Activated CD4-positive, alpha-beta memory T cell treated with anti-CD3 and anti-CD28 coated beads for 36 hours (primary cell): ENCODE measurements at regions of chr4 and their contacts with region 1.

Region 1: DNA sequence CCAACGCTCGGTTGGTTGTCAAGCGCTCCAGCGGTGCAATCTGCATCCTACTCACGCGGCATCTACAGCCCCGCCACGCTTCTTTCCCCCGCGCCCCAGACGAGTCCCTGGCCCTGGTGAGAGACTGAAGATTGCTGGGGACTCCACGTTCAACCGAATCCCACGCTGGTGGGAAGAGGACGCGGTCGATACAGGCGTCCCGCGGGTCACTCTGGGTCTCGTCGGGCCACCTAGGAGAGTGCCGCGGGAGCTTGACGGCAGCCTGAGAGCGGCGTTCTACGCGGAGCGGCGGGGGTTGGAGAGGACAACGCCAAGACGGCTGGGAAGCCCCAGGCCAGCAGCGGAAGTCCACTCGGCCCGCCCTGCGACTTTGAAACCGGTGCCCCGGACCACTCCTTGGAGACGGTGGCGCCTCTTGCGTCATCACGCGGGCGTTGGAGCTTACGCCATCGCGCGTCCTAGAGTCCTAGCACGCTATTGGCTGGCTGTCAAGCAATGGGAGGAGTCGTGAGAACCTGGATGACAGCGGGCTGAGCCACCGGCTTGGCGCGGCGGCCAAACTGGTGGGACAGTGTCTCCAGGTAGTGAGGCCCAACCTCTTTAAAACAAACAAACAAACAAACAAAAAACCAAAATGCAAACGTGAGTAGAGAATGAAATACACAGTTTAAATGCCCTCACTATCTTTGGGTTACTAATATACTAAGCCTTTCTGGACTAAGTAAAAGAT is at the start of gene SCLT1:
- DNase-seq: peak; percentile 98
- H3K4me3 Mint-ChIP-seq: peak within 1 kb of the TSS; percentile 53
- H3K27ac Mint-ChIP-seq: no peak within 1 kb of the TSS
- H3K4me1 Mint-ChIP-seq: peaks cover 33% of the 10 kb centered on the region
- H3K27me3 Mint-ChIP-seq: no peaks in the 10 kb centered on the region
- total RNA-seq, gene SCLT1: 20.8 to 20.9 TPM

Region 2: DNA sequence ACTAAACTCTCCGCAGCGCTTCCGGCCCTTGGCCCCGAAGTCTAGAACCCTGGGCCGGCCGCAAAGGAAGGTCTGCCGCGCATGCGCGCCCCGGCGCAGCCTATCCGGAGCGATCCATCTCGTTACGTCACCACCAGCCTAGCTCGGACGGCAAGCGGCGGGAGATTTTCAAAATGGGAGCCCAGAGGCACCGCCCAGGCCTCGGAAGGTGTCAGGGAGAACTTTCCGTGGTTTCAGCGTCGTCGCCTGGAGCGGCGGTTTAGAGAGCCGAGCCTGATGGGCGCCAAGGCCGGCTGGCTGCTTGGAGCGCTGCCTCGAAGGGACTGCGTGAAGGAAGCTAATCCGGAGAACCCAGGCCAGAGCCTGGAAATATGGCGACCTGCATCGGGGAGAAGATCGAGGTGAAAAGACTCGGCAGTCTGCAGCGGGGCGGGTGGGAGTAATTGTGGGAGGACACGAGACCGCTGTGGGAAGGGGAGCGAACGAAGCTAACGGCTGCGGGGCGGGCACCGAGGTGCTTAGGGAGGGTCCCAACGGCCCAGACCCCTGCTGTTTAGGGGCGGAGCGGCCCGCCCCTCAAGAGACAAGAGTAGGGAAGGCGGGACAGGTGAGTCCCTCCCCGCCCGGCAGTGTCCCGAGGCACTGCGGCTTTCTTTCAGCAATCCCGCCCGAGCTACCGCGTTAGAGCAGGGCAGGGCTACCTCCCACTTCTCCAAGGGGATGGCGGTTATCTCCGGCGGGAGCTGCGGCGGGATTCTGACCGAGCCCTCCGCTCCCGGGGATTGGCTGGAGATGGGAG is 1212.4 kb before region 1 on chr4 and contains the start of gene PLK4:
- CTCF ChIA-PET with region 1: no interaction called
- POLR2A ChIA-PET with region 1: no interaction called
- intact Hi-C with region 1: loop called (anchors 1 kb)
- DNase-seq: peak; percentile 97
- H3K4me3 Mint-ChIP-seq: peak within 1 kb of the TSS; percentile 95
- H3K27ac Mint-ChIP-seq: peak within 1 kb of the TSS; percentile 98
- H3K4me1 Mint-ChIP-seq: peaks cover 14% of the 10 kb centered on the region
- H3K27me3 Mint-ChIP-seq: peaks cover 2% of the 10 kb centered on the region
- total RNA-seq, gene PLK4: 43.5 to 45.6 TPM

Region 3: DNA sequence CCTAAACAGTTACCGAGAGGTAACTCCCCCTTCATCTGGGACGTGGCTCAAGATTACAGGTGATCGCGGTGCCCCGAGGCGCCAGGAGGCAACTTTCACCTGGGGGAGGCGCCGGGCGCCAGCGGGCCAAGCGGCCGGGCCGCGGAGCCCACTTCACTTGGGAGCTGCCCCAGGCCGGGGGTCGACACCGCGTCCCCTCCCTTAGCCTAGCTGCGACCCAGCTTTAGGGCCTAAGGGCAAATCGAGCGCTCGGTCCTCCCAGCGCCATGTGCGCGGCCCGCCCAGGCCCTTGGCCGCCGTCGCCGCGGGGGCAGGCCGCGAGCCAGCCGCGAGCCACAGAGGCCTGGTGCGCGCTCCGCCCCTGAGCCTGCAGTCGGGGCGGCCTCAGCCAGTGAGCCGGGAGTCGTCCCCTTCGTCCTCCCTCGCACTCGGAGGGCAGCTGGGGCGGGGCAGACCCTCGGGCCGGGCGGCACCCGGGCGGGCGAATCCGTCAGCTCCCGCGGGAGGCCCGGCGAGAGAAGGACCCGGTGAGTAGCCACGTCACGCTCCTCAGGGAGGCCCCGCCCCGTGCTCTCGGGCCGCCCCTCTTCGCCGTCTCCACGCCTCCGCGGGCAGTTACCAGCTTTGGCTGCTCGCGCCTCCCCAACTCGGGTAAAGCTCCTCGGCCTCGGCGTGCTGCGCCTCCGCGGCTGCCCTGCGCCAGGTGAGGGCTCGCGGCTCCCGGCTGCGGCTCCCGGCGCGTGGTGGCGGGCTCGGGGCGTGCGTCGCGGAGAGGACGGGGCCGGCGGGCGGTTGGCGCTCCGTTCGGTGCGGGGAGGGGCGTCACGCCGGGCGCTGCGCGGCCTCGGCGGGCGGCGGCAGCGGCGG is 1032.4 kb before region 1 on chr4 and contains the start of gene LARP1B:
- CTCF ChIA-PET with region 1: no interaction called
- POLR2A ChIA-PET with region 1: no interaction called
- intact Hi-C with region 1: loop called (anchors 2 kb)
- DNase-seq: peak; percentile 95
- H3K4me3 Mint-ChIP-seq: peak within 1 kb of the TSS; percentile 87
- H3K27ac Mint-ChIP-seq: peak within 1 kb of the TSS; percentile 87
- H3K4me1 Mint-ChIP-seq: peaks cover 15% of the 10 kb centered on the region
- H3K27me3 Mint-ChIP-seq: no peaks in the 10 kb centered on the region
- total RNA-seq, gene LARP1B: 23.5 to 25.5 TPM

Region 4: GRCh38 chr4:128574706-128575105 is 518.6 kb before region 1 on chr4:
- CTCF ChIA-PET with region 1: no interaction called
- POLR2A ChIA-PET with region 1: no interaction called
- intact Hi-C with region 1: loop called (anchors 5 kb)
- DNase-seq: peak; percentile 82
- H3K4me3 Mint-ChIP-seq: no peak overlapping the region
- H3K27ac Mint-ChIP-seq: no peak overlapping the region
- H3K4me1 Mint-ChIP-seq: no peaks in the 10 kb centered on the region
- H3K27me3 Mint-ChIP-seq: peaks cover 4% of the 10 kb centered on the region

Region 5: GRCh38 chr4:129046055-129046959 is 47.0 kb before region 1 on chr4:
- CTCF ChIA-PET with region 1: interaction called, 4 read pairs
- POLR2A ChIA-PET with region 1: no interaction called
- intact Hi-C with region 1: loop called (anchors 1 kb)
- DNase-seq: no peak
- H3K4me3 Mint-ChIP-seq: no peak overlapping the region
- H3K27ac Mint-ChIP-seq: no peak overlapping the region
- H3K4me1 Mint-ChIP-seq: peaks cover 14% of the 10 kb centered on the region
- H3K27me3 Mint-ChIP-seq: no peaks in the 10 kb centered on the region

Region 6: DNA sequence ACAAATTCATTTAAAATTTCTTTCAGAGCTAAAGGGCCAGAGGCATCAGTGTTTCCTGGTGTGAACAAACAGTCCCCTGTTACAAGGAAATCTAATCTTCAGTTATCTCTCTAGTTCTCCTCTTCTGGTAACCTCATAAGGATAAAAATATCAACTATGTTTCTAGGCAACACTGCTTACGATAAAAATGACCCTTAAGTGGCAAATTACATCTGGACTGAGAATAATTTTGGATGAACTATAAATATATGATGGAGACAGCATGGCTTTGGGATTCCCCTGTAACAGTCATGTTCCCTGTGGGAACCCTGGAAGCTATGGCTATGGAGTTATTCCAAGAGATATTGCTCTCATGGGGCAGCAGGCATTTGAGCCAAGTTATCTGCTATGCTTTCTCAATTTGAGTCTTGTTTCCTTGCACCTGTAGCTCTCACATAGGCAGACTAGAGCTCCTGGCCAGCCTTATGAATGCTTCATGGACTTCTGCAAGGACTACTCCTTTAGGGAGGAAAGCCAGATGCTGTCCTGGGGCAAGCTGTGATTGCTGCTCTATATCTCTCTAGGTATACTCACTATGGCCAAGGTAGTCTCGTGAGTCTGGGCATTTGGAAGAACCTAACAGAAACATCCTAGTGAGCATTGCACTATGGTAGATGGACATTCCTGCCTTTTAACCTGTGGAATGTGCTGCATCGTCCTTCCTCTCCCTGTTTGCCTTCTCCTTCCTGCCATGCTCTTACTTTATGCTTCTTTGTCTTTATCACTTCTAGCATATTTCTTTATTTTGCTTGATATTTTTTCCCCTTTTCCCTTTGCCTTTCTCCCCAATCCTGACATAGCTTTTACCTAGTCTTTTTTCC is 16.8 kb after region 1 on chr4:
- CTCF ChIA-PET with region 1: no interaction called
- POLR2A ChIA-PET with region 1: no interaction called
- intact Hi-C with region 1: no loop called
- DNase-seq: no peak
- H3K4me3 Mint-ChIP-seq: no peak overlapping the region
- H3K27ac Mint-ChIP-seq: no peak overlapping the region
- H3K4me1 Mint-ChIP-seq: no peaks in the 10 kb centered on the region
- H3K27me3 Mint-ChIP-seq: no peaks in the 10 kb centered on the region